Natural killer cell (primary cell): ENCODE measurements at regions of chr4 and their contacts with region 1.

Region 1: DNA sequence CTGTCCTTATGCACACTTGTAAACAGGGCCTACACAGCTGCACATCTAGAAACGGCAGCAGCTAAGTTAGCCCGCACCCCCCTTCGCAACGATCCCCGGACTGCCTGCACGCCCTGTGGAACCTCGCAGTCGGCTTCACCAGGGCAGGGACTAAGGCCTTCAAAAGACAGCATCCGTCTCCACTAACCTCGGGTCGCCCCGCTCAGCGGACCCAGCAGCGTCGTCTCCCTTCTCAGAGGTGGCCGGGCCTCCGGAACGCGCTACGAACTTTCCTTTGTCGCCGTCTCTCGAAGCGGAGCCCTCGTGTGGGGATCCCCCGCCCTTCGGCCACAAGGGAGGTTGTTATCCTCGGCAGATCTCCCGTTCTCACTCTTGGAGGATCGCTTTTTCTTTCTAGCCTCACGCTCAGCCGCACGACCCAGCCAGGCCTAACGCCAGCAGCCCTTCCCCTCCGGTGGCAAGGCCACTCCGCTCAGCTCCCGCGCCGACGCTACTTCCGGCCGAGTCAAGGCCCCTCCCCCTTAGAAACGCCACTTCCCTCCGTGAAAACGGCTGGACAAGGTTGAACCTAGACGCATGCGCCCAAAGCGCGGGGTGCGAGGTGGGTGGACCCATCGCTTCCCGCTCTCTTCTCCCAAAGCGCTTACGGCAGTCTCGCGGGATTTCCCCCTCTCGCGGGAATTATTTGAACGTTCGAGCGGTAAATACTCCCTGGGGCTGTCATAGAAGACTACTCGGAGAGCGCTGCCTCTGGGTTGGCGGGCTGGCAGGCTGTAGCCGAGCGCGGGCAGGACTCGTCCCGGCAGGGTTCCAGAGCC is at the starts of genes DCAF16 and NCAPG:
- DNase-seq: peak; percentile 99
- ATAC-seq: peak; percentile 91 to 98 (median 94)
- H3K4me3 ChIP-seq: peak within 1 kb of the TSS; percentile 99
- H3K4me3 Mint-ChIP-seq: peak within 1 kb of the TSS; percentile 94
- H3K27ac ChIP-seq: peak within 1 kb of the TSS; percentile 99
- H3K27ac Mint-ChIP-seq: peak within 1 kb of the TSS; percentile 99 to 100
- H3K4me1 ChIP-seq: peaks cover 17% of the 10 kb centered on the region
- H3K4me1 Mint-ChIP-seq: peaks cover 58 to 61% of the 10 kb centered on the region in 2 donors
- H3K27me3 ChIP-seq: no peaks in the 10 kb centered on the region
- H3K27me3 Mint-ChIP-seq: no peaks in the 10 kb centered on the region
- CTCF ChIP-seq: no peak
- total RNA-seq, gene DCAF16: 73.9 to 93.8 (median 90.3) TPM
- total RNA-seq, gene NCAPG: 1.3 to 1.8 (median 1.6) TPM

Region 2: GRCh38 chr4:17544205-17544604 is 266.3 kb before region 1 on chr4:
- intact Hi-C with region 1: loop called (anchors 1 kb)
- DNase-seq: no peak
- ATAC-seq: no peak
- H3K4me3 ChIP-seq: no peak overlapping the region
- H3K4me3 Mint-ChIP-seq: no peak overlapping the region
- H3K27ac ChIP-seq: no peak overlapping the region
- H3K27ac Mint-ChIP-seq: no peak overlapping the region
- H3K4me1 ChIP-seq: no peaks in the 10 kb centered on the region
- H3K4me1 Mint-ChIP-seq: peaks cover 1 to 3% of the 10 kb centered on the region in 2 donors
- H3K27me3 ChIP-seq: no peaks in the 10 kb centered on the region
- H3K27me3 Mint-ChIP-seq: peaks cover 18 to 37% of the 10 kb centered on the region in 2 donors
- CTCF ChIP-seq: no peak

Region 3: DNA sequence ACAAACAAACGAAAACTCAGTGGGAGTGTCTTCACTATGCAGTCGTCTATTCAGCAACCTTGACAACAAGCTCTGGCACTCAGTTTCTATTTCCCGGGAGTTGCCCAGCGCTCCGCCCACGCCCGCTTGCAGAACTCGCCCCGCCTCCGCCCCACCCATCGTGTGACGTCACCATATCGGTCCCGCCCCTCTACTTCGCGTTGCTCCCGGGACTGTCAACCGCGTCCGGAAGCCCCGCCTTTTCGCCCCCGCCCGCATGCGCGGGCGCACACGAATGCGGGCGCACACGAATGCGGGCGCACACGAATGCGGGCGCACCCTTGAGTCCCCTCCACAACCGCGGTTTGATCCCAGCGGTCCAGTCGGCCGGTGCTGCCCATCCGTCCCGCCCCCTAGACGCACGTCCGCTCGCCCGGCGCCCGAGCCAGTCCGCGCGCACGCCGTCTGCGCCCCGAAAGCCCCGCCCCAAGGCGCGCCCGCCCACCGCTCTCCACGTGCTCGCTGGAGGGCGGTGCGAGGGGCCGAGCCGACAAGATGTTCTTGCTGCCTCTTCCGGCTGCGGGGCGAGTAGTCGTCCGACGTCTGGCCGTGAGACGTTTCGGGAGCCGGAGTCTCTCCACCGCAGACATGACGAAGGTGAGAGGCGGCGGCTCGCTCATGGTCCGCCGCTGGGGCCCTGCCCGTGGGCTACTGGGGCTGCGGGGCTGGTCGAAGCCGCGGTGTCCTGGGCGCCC is 233.4 kb before region 1 on chr4 and contains the start of gene LAP3:
- intact Hi-C with region 1: loop called (anchors 1 kb)
- DNase-seq: peak; percentile 99 to 100
- ATAC-seq: peak; percentile 85 to 96 (median 87)
- H3K4me3 ChIP-seq: peak within 1 kb of the TSS; percentile 86
- H3K4me3 Mint-ChIP-seq: peak within 1 kb of the TSS; percentile 96
- H3K27ac ChIP-seq: peak within 1 kb of the TSS; percentile 96
- H3K27ac Mint-ChIP-seq: peak within 1 kb of the TSS; percentile 97 to 98
- H3K4me1 ChIP-seq: peaks cover 19% of the 10 kb centered on the region
- H3K4me1 Mint-ChIP-seq: peaks cover 20 to 24% of the 10 kb centered on the region in 2 donors
- H3K27me3 ChIP-seq: no peaks in the 10 kb centered on the region
- H3K27me3 Mint-ChIP-seq: no peaks in the 10 kb centered on the region
- CTCF ChIP-seq: no peak
- total RNA-seq, gene LAP3: 68.2 to 76.1 (median 71.6) TPM

Region 4: DNA sequence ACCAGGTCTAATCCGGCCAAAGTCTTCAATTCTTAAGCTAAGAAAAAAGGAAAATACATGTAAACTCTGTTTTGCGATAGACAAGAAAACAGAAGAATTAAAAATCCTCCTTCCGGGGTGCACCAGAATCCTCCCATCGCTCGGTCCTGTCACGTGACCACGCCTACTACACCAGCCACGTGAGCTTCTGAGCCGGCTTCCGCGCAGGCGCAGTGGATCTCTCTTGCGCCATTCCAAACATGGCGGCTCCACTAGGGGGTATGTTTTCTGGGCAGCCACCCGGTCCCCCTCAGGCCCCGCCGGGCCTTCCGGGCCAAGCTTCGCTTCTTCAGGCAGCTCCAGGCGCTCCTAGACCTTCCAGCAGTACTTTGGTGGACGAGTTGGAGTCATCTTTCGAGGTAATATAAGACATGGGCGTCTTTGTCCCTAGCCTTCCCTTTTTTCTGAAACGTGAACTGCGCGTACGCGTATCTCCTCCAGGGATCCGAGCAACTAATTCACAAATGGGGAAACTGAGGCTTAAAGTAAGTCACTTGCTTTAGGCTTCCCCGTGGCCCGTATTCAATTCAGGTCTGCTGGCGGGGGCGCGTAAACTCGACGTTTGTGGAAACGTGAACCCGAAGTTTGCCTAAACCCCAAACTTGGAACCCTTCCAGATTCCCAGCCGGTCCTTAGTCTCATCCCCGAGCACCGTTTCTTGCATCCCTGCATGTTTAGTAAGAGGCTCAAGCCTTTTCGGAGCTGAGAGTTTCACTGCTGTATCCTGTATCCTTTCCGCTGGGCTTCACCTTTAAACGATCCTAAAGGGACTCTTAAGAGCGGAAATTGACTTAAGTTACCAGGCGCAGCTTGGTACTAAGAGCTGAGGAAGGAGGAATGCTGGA is 195.8 kb before region 1 on chr4 and contains the start of gene MED28:
- intact Hi-C with region 1: loop called (anchors 1 kb)
- DNase-seq: peak; percentile 93 to 99
- ATAC-seq: peak; percentile 89 to 96 (median 94)
- H3K4me3 ChIP-seq: peak within 1 kb of the TSS; percentile 96
- H3K4me3 Mint-ChIP-seq: peak within 1 kb of the TSS; percentile 98
- H3K27ac ChIP-seq: peak within 1 kb of the TSS; percentile 85
- H3K27ac Mint-ChIP-seq: peak within 1 kb of the TSS; percentile 97 to 98
- H3K4me1 ChIP-seq: peaks cover 34% of the 10 kb centered on the region
- H3K4me1 Mint-ChIP-seq: peaks cover 34 to 37% of the 10 kb centered on the region in 2 donors
- H3K27me3 ChIP-seq: no peaks in the 10 kb centered on the region
- H3K27me3 Mint-ChIP-seq: no peaks in the 10 kb centered on the region
- CTCF ChIP-seq: peak; percentile 25
- total RNA-seq, gene MED28: 44.8 to 63.3 (median 51.1) TPM

Region 5: GRCh38 chr4:17769406-17770174 is 40.9 kb before region 1 on chr4:
- intact Hi-C with region 1: loop called (anchors 5 kb)
- DNase-seq: no peak
- ATAC-seq: no peak
- H3K4me3 ChIP-seq: no peak overlapping the region
- H3K4me3 Mint-ChIP-seq: no peak overlapping the region
- H3K27ac ChIP-seq: no peak overlapping the region
- H3K27ac Mint-ChIP-seq: no peak overlapping the region
- H3K4me1 ChIP-seq: no peaks in the 10 kb centered on the region
- H3K4me1 Mint-ChIP-seq: peaks cover 12% of the 10 kb centered on the region in 2 donors
- H3K27me3 ChIP-seq: no peaks in the 10 kb centered on the region
- H3K27me3 Mint-ChIP-seq: peaks cover 0 to 12% of the 10 kb centered on the region in 2 donors
- CTCF ChIP-seq: no peak

Region 6: GRCh38 chr4:18021722-18022571 is 211.5 kb after region 1 on chr4 and contains the start of gene LCORL:
- intact Hi-C with region 1: loop called (anchors 1 kb)
- DNase-seq: peak; percentile 83 to 94
- ATAC-seq: peak; percentile 79 to 91 (median 83)
- H3K4me3 ChIP-seq: peak within 1 kb of the TSS; percentile 79
- H3K4me3 Mint-ChIP-seq: peak within 1 kb of the TSS; percentile 98
- H3K27ac ChIP-seq: peak within 1 kb of the TSS; percentile 84
- H3K27ac Mint-ChIP-seq: peak within 1 kb of the TSS; percentile 83 to 97
- H3K4me1 ChIP-seq: peaks cover 16% of the 10 kb centered on the region
- H3K4me1 Mint-ChIP-seq: peaks cover 24 to 27% of the 10 kb centered on the region in 2 donors
- H3K27me3 ChIP-seq: no peaks in the 10 kb centered on the region
- H3K27me3 Mint-ChIP-seq: peaks cover 0 to 3% of the 10 kb centered on the region in 2 donors
- CTCF ChIP-seq: no peak
- total RNA-seq, gene LCORL: 19.9 to 28.4 (median 26.4) TPM